GM18951 (cell line): ENCODE measurements at regions of chr5 and their contacts with region 1.

Region 1: DNA sequence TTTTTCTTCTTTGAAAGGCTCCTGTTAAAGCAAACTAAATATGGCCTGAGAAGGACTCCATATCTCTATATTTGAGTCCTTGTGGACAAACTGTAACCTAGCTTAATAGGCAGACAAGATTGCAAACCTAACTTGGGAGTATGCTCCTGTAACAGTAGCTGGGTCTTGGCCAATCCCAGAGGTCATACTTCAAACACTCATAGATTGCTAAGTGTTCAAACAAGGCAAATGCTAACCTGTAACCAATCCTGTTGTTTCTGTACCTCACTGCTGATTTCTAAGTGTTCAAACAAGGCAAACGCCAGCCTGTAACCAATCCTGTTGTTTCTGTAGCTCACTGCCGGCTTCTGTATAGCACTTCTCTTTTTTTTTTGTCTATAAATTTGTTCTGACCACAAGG is 50.6 kb upstream of the CLK4 start:
- POLR2A ChIP-seq: no peak

Region 2: DNA sequence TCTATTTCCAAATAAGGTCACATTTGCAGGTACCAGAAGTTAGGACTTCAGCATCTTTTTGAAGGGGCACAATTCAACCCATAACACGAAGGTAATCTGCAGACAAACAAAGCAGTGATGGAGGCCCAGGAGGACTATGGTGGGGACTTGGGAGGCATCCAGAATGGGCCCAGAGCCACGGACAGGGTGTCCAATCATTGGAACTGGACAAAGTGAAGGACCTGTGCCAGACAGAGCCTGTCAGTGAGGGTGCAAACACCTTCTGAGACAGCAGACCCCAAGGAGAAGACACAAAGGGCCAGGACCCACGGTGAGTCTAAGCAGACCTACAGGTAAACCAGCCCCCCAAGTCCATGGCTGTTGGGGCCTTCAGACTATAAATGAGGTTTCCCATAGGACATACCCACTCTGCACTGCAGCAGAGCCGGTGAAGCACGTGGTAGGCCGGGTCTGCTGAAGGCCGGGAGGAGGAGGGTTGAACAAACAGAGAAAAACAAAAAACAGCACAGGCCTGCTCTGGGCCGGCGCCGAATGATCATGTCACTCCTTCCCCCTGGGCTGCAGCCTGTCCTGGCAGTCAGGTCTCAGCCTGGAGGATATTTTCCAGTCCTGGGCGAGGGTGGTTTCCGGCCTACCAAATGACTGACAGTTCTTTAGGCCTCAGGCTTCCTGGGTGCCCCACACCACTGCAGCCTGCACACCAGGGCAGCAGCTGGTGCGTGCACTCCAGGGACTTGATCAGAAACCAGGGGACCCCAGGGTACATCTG is 171.6 kb before region 1 on chr5:
- in situ Hi-C with region 1: no loop called
- POLR2A ChIP-seq: no peak

Region 3: GRCh38 chr5:178984145-178985072 is 307.0 kb after region 1 on chr5:
- in situ Hi-C with region 1: loop called (anchors 10 kb)
- POLR2A ChIP-seq: no peak